A673 (cell line): ENCODE measurements at regions of chr12 and their contacts with region 1.

Region 1: DNA sequence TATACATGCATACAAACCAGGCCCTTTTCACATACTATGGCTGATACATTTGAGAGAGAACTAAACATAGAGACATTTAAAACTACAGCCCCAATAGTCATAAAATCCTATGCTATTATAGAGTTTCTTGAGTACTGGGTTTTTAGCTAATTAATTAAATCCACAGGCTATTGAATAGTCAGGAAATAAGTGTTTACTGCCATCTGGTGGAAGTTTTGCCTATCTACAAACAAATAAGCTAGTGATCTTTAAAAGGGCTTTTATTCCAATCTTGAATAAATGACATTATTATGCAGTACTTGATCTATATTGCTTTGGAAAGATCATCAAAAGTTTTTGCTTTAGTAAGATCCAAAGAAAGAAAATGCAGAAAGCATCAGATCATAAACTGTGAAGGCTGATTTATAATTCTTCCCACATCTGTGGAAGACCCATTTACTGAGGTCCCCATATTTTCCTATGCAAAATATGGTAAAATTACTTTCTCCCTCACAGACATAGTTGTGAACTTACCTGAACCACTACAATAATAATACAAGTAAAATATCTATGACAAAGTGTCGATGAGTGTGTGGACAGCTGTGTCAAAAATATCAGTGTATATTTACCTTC is 131.3 kb downstream of the ITPR2 start:
- DNase-seq: peak; percentile 78
- H3K4me3 ChIP-seq: no peak overlapping the region
- H3K27ac ChIP-seq: no peak overlapping the region
- H3K4me1 ChIP-seq: peaks cover 29% of the 10 kb centered on the region
- H3K27me3 ChIP-seq: no peaks in the 10 kb centered on the region
- CTCF ChIP-seq: peak; percentile 75

Region 2: DNA sequence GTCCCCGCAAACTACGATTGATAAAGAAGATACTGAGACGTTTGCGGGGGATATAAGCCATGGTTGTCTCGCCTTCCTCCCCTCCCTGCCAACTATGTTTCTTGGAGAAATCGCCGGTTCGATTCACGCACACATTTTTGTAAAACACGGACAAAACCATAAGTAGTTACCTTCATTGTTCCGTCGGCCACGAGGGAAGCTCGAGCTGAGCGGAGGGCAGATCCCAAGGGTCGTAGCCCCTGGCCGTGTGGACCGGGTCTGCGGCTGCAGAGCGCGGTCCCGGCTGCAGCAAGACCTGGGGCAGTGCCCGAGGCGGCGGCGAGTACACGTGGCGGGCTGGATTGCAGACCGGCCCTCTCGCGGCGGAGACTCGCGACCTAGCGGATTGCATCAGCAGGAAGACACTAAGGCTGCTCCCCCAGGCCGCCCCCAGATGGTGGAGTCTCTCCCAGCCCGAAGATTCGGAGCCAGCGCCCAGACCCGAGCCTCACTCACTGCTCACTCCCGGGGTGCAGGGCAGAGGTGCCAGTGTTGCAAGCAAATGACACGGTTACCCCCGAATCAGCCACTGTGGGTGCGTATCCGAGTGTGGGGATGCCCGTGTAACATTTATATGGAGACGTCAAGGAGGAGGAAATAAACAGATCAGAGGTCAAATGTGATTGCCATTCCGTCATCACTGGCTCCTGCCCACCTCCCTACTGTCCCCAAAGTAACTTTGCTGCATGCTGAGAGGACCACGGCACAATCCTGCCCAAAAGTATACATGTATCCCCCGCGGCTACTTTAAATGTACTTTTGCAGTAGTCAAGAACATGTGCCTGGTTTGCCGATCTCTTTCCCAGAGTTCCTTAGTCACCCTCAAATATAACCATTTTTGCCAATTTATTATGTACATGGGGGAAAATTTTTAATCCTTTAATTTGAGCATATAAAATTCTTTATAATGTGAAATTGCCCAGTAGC is 1752.7 kb before region 1 on chr12 and contains the start of gene BCAT1:
- CTCF ChIA-PET with region 1: interaction called, 12 read pairs
- POLR2A ChIA-PET with region 1: no interaction called
- intact Hi-C with region 1: no loop called
- DNase-seq: peak; percentile 87
- H3K4me3 ChIP-seq: peak within 1 kb of the TSS; percentile 67
- H3K27ac ChIP-seq: peak within 1 kb of the TSS; percentile 91
- H3K4me1 ChIP-seq: peaks cover 35% of the 10 kb centered on the region
- H3K27me3 ChIP-seq: no peaks in the 10 kb centered on the region
- CTCF ChIP-seq: peak; percentile 38; the same call in 1 of the 2 replicates
- total RNA-seq, gene BCAT1: 185 and 195 TPM in 2 replicates

Region 3: DNA sequence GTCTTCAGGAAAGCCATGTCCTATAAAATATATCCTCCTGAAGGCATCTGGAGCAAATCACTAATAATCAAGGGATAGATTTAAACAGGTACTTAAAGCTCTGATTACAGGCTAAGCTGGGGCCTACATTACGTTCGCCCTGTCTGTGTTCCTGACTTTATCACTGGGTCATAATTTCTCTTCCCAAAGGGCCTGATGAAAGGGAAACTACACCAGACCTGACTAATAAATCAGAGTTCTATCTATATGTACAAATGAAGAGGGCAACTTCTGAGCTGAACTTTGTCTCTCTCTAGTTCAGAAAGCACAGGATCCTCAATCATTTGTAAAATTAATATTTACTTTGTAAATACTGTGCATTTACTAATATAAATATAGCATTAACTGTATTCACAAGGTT is 787.1 kb before region 1 on chr12:
- CTCF ChIA-PET with region 1: no interaction called
- POLR2A ChIA-PET with region 1: no interaction called
- intact Hi-C with region 1: no loop called
- DNase-seq: no peak
- H3K4me3 ChIP-seq: no peak overlapping the region
- H3K27ac ChIP-seq: no peak overlapping the region
- H3K4me1 ChIP-seq: no peaks in the 10 kb centered on the region
- H3K27me3 ChIP-seq: no peaks in the 10 kb centered on the region
- CTCF ChIP-seq: no peak

Region 4: GRCh38 chr12:26434299-26435068 is 267.2 kb before region 1 on chr12:
- CTCF ChIA-PET with region 1: interaction called, 3 read pairs
- POLR2A ChIA-PET with region 1: no interaction called
- intact Hi-C with region 1: loop called (anchors 1 kb)
- DNase-seq: peak; percentile 79
- H3K4me3 ChIP-seq: no peak overlapping the region
- H3K27ac ChIP-seq: no peak overlapping the region
- H3K4me1 ChIP-seq: no peaks in the 10 kb centered on the region
- H3K27me3 ChIP-seq: no peaks in the 10 kb centered on the region
- CTCF ChIP-seq: peak; percentile 79

Region 5: DNA sequence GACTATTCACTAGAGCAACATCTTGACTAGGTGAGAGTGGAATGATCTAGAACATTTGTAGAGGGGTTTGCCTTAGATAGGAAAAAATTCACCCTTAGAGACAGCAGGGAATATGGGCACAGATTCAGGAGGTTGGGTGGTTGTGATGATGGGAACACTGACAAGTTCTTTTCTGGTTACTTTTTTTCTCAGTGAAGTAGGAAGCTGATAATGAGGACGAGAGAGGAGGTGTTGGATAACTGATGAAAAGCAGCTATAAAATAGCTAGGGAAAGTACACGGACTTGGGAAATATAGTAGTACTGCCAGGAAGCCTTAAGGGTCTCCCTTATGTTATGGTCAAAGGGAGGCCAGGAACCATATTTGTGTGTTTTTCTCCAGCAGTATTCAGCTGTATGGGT is 255.8 kb before region 1 on chr12:
- CTCF ChIA-PET with region 1: no interaction called
- POLR2A ChIA-PET with region 1: no interaction called
- intact Hi-C with region 1: loop called (anchors 5 kb)
- DNase-seq: no peak
- H3K4me3 ChIP-seq: no peak overlapping the region
- H3K27ac ChIP-seq: no peak overlapping the region
- H3K4me1 ChIP-seq: no peaks in the 10 kb centered on the region
- H3K27me3 ChIP-seq: no peaks in the 10 kb centered on the region
- CTCF ChIP-seq: no peak

Region 6: DNA sequence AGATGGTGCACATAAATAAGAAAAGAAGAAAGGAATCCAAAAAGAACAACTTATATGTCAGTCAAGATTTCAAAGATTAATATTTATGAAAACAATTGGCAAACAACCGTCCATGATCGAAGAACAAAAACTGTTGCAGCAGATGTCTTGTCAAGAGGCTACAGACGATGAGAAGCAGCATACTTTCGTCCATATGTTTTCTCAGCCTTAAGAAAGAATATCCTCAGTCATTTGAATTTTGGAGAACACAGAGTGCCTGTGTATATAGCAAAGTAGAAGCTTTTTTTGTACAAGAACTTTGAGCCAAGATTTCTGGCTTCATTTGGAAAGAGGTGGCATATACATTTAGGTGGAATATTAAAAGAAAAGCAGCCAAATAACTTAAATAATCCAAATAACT is 165.9 kb before region 1 on chr12:
- CTCF ChIA-PET with region 1: no interaction called
- POLR2A ChIA-PET with region 1: no interaction called
- intact Hi-C with region 1: no loop called
- DNase-seq: no peak
- H3K4me3 ChIP-seq: no peak overlapping the region
- H3K27ac ChIP-seq: no peak overlapping the region
- H3K4me1 ChIP-seq: no peaks in the 10 kb centered on the region
- H3K27me3 ChIP-seq: no peaks in the 10 kb centered on the region
- CTCF ChIP-seq: no peak

Region 7: GRCh38 chr12:26668847-26669246 is 32.9 kb before region 1 on chr12:
- CTCF ChIA-PET with region 1: no interaction called
- POLR2A ChIA-PET with region 1: no interaction called
- intact Hi-C with region 1: no loop called
- DNase-seq: no peak
- H3K4me3 ChIP-seq: no peak overlapping the region
- H3K27ac ChIP-seq: no peak overlapping the region
- H3K4me1 ChIP-seq: peaks cover 7% of the 10 kb centered on the region
- H3K27me3 ChIP-seq: no peaks in the 10 kb centered on the region
- CTCF ChIP-seq: no peak

Region 8: GRCh38 chr12:27185234-27186021 is 483.7 kb after region 1 on chr12:
- CTCF ChIA-PET with region 1: no interaction called
- POLR2A ChIA-PET with region 1: no interaction called
- intact Hi-C with region 1: no loop called
- DNase-seq: no peak
- H3K4me3 ChIP-seq: no peak overlapping the region
- H3K27ac ChIP-seq: no peak overlapping the region
- H3K4me1 ChIP-seq: no peaks in the 10 kb centered on the region
- H3K27me3 ChIP-seq: no peaks in the 10 kb centered on the region
- CTCF ChIP-seq: no peak